Activated naive CD4-positive, alpha-beta T cell treated with anti-CD3 and anti-CD28 coated beads for 36 hours (primary cell): ENCODE measurements at regions of chr12 and their contacts with region 1.

Region 1: DNA sequence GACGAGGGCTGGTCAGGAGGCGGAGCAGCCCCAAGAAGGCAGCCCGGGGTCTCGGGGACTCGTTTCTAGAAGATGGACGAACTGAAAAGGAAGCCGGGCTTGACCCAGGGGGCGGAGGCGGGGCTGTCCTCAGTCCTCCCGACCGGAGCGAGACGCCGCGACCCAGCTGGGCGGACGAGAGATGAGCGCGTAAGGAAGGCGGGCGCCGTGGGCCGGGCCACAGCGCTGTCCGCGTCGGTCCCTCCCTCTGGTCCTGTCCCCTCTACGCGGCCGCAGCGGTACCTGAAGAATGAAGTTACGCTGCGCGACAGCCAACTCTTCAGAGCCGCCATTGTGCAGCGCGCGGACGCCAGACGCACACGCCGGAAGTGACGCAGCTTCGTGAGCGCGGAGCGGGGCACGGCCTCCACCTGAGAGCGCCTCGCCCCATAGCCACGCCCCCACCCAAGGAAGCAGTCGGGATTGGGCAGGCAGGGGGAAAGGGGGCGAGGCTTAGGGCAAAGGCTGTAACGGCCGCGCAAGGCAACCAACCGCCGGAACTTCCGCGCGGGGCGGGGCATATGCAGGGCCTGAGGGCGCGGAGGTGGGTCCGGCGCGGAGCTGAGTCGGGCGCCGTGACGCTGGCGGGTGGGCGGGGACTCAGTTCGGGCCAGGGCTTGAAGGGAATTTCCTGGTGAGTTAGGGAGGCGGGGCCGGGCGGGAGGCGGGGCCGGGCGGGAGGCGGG is at the start of gene DIABLO:
- DNase-seq: peak; percentile 100
- H3K4me3 Mint-ChIP-seq: peak within 1 kb of the TSS; percentile 84
- H3K27ac Mint-ChIP-seq: peak within 1 kb of the TSS; percentile 79
- H3K4me1 Mint-ChIP-seq: peaks cover 39% of the 10 kb centered on the region
- H3K27me3 Mint-ChIP-seq: no peaks in the 10 kb centered on the region
- total RNA-seq, gene DIABLO: 46.1 to 48.1 TPM

Region 2: GRCh38 chr12:121839106-121839992 is 386.5 kb before region 1 on chr12:
- CTCF ChIA-PET with region 1: no interaction called
- intact Hi-C with region 1: loop called (anchors 1 kb)
- DNase-seq: peak; percentile 100
- H3K4me3 Mint-ChIP-seq: peak overlapping the region; percentile 97
- H3K27ac Mint-ChIP-seq: peak overlapping the region; percentile 88
- H3K4me1 Mint-ChIP-seq: peaks cover 11% of the 10 kb centered on the region
- H3K27me3 Mint-ChIP-seq: no peaks in the 10 kb centered on the region

Region 3: GRCh38 chr12:122159882-122160281 is 66.0 kb before region 1 on chr12:
- CTCF ChIA-PET with region 1: no interaction called
- intact Hi-C with region 1: no loop called
- DNase-seq: no peak
- H3K4me3 Mint-ChIP-seq: no peak overlapping the region
- H3K27ac Mint-ChIP-seq: no peak overlapping the region
- H3K4me1 Mint-ChIP-seq: peaks cover 2% of the 10 kb centered on the region
- H3K27me3 Mint-ChIP-seq: no peaks in the 10 kb centered on the region

Region 4: DNA sequence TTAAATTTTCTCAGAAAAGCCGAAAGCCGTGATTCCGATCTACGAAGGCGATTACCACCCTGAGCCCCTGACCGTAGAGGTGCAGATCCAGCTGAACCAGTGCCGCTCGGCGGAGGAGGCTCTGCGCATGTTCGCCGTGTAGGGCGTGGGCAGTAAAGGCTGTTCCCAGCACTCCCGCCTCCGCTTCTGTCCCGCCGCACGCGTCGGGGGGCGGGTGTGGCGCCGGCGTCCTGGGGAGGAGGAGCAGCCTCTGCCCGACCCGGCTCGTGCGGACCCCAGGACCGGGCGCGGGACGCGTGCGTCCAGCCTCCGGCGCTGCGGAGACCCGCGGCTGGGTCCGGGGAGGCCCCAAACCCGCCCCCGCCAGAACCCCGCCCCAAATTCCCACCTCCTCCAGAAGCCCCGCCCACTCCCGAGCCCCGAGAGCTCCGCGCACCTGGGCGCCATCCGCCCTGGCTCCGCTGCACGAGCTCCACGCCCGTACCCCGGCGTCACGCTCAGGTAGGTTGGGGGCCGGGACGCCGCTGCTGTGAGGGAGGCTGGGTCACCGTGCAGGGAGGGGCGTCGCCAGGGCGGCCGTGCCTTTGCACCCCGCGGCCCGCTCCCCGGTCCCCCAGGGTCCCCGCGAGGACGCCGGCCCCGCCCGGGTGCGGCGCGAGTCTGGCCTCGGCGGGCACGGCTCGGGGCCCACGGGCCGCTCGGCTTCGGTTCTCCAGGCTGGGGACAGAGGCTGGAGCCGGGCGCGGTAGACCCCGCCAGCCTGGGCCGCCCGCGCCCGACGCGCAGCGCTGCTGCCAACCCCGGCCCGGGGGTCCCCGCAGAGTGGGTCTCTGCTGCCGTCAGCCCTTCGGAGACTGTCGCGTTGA is 22.3 kb before region 1 on chr12 and contains the start of gene B3GNT4:
- CTCF ChIA-PET with region 1: no interaction called
- intact Hi-C with region 1: loop called (anchors 1 kb)
- DNase-seq: peak; percentile 68
- H3K4me3 Mint-ChIP-seq: peak within 1 kb of the TSS; percentile 73
- H3K27ac Mint-ChIP-seq: no peak within 1 kb of the TSS
- H3K4me1 Mint-ChIP-seq: peaks cover 15% of the 10 kb centered on the region
- H3K27me3 Mint-ChIP-seq: peaks cover 10% of the 10 kb centered on the region
- total RNA-seq, gene B3GNT4: 0.43 to 0.67 TPM

Region 5: GRCh38 chr12:122421821-122422729 is 196.2 kb after region 1 on chr12 and contains the start of gene CLIP1:
- CTCF ChIA-PET with region 1: no interaction called
- intact Hi-C with region 1: loop called (anchors 1 kb)
- DNase-seq: peak; percentile 62
- H3K4me3 Mint-ChIP-seq: peak within 1 kb of the TSS; percentile 88
- H3K27ac Mint-ChIP-seq: peak within 1 kb of the TSS; percentile 90
- H3K4me1 Mint-ChIP-seq: peaks cover 38% of the 10 kb centered on the region
- H3K27me3 Mint-ChIP-seq: peaks cover 3% of the 10 kb centered on the region
- total RNA-seq, gene CLIP1: 50.7 to 51.3 TPM

Region 6: GRCh38 chr12:122752464-122753318 is 526.8 kb after region 1 on chr12 and contains the start of gene DENR:
- CTCF ChIA-PET with region 1: no interaction called
- intact Hi-C with region 1: loop called (anchors 10 kb)
- DNase-seq: peak; percentile 100
- H3K4me3 Mint-ChIP-seq: peak within 1 kb of the TSS; percentile 98
- H3K27ac Mint-ChIP-seq: peak within 1 kb of the TSS; percentile 90
- H3K4me1 Mint-ChIP-seq: peaks cover 51% of the 10 kb centered on the region
- H3K27me3 Mint-ChIP-seq: no peaks in the 10 kb centered on the region
- total RNA-seq, gene DENR: 47.9 to 52.4 TPM